Posterior vena cava (tissue), 2 donors: ENCODE measurements at regions of chr3 and their contacts with region 1.

Region 1: GRCh38 chr3:171295484-171296373 is 164.5 kb downstream of the TNIK start:
- DNase-seq: no peak

Region 2: GRCh38 chr3:171269542-171269941 is 26.2 kb before region 1 on chr3:
- intact Hi-C with region 1: no loop called
- DNase-seq: no peak

Region 3: DNA sequence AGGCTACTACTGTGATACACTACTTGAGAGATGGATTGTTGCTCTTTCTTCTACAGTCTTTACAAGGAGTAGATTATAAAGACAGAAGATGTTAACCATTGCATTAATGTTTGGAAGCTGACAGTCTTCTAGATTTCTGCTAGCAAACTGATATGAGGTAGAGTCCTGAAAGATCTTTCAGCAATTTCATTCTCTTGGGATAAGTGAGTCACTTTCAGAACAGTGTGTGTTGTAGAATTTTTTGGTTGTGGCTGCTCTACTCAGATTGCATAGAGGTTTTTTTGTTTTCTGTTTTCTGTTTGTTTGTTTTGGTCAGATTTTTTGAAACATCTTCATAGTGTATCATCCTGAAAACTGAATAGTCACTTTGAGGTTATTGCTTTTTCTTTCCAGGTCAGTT is 1210.4 kb after region 1 on chr3:
- intact Hi-C with region 1: loop called in 1 of 2 experiments (anchors 5 kb)
- DNase-seq: no peak